Head of caudate nucleus (tissue), 42 donors: ENCODE measurements at regions of chr7 and their contacts with region 1.

Region 1: GRCh38 chr7:107579885-107580715 is at the start of gene BCAP29:
- DNase-seq: peak; percentile 14 to 84 (median 70)

Region 2: DNA sequence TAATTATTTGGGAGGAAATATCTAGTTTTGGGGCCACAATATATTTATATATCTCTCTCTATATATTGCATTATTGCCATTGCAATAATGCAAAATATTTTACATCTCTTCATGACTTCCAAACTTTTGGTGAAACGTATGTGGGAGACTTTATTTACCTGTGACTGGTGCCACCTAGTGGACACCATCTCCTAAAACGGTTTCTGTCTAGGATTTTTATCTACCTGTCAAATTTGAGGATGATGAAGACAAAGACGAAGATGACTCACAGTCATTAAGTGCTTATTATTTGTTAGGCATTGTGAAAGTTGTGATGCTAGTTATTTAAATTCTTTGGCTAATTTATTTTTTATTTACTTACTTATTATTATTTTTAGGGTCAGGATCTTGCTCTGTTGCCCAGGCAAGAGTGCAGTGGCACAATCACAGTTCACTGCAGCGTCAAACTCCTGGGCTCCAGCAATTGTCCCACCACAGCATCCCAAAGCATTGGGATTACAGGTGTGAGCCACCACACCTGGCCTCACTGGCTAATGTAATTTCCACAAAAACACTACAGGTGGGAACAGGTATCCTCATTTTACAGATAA is 145.1 kb after region 1 on chr7:
- intact Hi-C with region 1: loop called (anchors 10 kb)
- DNase-seq: peak in 32 of 42 donors; percentile 9 to 83 (median 52)